Mammary epithelial cell (primary cell): ENCODE measurements at regions of chr3 and their contacts with region 1.

Region 1: DNA sequence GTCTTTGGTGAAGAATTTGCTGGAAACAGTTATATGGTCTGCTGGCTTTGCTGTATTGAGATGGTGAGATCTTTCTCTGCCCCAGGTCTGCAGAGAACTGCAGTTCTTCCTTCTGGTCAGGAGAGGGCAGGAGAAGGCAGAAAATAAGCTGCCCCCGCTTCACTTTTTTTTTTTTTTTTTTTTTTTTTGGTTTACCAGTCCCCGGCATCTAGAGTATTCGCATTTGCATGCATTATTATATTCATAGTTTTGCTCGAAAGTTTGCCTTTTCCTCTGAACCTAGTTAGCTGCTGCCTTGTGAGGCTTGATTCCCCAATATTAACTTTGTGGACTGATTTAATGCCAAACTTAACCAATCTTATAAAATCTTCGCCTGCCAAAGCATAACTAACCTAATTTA is 10.6 kb upstream of the PARL start:
- DNase-seq: peak; percentile 32
- H3K4me3 ChIP-seq: no peak overlapping the region
- H3K27ac ChIP-seq: no peak overlapping the region
- H3K4me1 ChIP-seq: no peaks in the 10 kb centered on the region
- H3K27me3 ChIP-seq: no peaks in the 10 kb centered on the region
- CTCF ChIP-seq: peak; percentile 83 to 92

Region 2: GRCh38 chr3:183991403-183991802 is 96.1 kb after region 1 on chr3:
- CTCF ChIA-PET with region 1: no interaction called
- dilution Hi-C with region 1: loop called (anchors 10 kb)
- in situ Hi-C with region 1: no loop called
- intact Hi-C with region 1: no loop called
- DNase-seq: peak; percentile 14
- H3K4me3 ChIP-seq: no peak overlapping the region
- H3K27ac ChIP-seq: no peak overlapping the region
- H3K4me1 ChIP-seq: no peaks in the 10 kb centered on the region
- H3K27me3 ChIP-seq: no peaks in the 10 kb centered on the region
- CTCF ChIP-seq: no peak

Region 3: GRCh38 chr3:184135149-184135910 is 240.0 kb after region 1 on chr3 and contains the start of gene EIF2B5:
- CTCF ChIA-PET with region 1: no interaction called
- dilution Hi-C with region 1: no loop called
- in situ Hi-C with region 1: no loop called
- intact Hi-C with region 1: loop called (anchors 2 kb)
- DNase-seq: peak; percentile 87
- H3K4me3 ChIP-seq: peak within 1 kb of the TSS; percentile 51 to 88 (median 86)
- H3K27ac ChIP-seq: peak within 1 kb of the TSS; percentile 51
- H3K4me1 ChIP-seq: peaks cover 12% of the 10 kb centered on the region
- H3K27me3 ChIP-seq: no peaks in the 10 kb centered on the region
- CTCF ChIP-seq: peak in 1 of 2 donors; percentile 47
- total RNA-seq, gene EIF2B5: 24.5 to 34.8 TPM

Region 4: GRCh38 chr3:184289426-184289938 is 394.2 kb after region 1 on chr3:
- CTCF ChIA-PET with region 1: interaction called, 19 read pairs
- dilution Hi-C with region 1: no loop called
- in situ Hi-C with region 1: loop called (anchors 10 kb)
- intact Hi-C with region 1: loop called (anchors 1 kb)
- DNase-seq: peak; percentile 59
- H3K4me3 ChIP-seq: no peak overlapping the region
- H3K27ac ChIP-seq: no peak overlapping the region
- H3K4me1 ChIP-seq: no peaks in the 10 kb centered on the region
- H3K27me3 ChIP-seq: no peaks in the 10 kb centered on the region
- CTCF ChIP-seq: peak; percentile 60 to 77

Region 5: GRCh38 chr3:184543843-184544512 is 648.7 kb after region 1 on chr3:
- CTCF ChIA-PET with region 1: no interaction called
- dilution Hi-C with region 1: no loop called
- in situ Hi-C with region 1: no loop called
- intact Hi-C with region 1: loop called (anchors 1 kb)
- DNase-seq: peak; percentile 72
- H3K4me3 ChIP-seq: no peak overlapping the region
- H3K27ac ChIP-seq: no peak overlapping the region
- H3K4me1 ChIP-seq: peaks cover 2% of the 10 kb centered on the region
- H3K27me3 ChIP-seq: no peaks in the 10 kb centered on the region
- CTCF ChIP-seq: peak; percentile 84 to 86